ENCODE measurements at regions of chrX and their contacts with region 1.

Region 1: GRCh38 chrX:104136241-104137019 is 20.4 kb downstream of the SLC25A53 start:
- DNase-seq: peak; percentile 79
- H3K4me3 ChIP-seq: peak overlapping the region; percentile 61
- H3K27ac ChIP-seq: peak overlapping the region; percentile 72
- H3K27me3 ChIP-seq: no peaks in the 10 kb centered on the region
- CTCF ChIP-seq: peak; percentile 69

Region 2: GRCh38 chrX:104098151-104098808 is 38.1 kb before region 1 on chrX:
- CTCF ChIA-PET with region 1: interaction called, 35 read pairs
- POLR2A ChIA-PET with region 1: no interaction called
- DNase-seq: peak; percentile 45
- H3K4me3 ChIP-seq: no peak overlapping the region
- H3K27ac ChIP-seq: no peak overlapping the region
- H3K27me3 ChIP-seq: no peaks in the 10 kb centered on the region
- CTCF ChIP-seq: peak; percentile 57

Region 3: DNA sequence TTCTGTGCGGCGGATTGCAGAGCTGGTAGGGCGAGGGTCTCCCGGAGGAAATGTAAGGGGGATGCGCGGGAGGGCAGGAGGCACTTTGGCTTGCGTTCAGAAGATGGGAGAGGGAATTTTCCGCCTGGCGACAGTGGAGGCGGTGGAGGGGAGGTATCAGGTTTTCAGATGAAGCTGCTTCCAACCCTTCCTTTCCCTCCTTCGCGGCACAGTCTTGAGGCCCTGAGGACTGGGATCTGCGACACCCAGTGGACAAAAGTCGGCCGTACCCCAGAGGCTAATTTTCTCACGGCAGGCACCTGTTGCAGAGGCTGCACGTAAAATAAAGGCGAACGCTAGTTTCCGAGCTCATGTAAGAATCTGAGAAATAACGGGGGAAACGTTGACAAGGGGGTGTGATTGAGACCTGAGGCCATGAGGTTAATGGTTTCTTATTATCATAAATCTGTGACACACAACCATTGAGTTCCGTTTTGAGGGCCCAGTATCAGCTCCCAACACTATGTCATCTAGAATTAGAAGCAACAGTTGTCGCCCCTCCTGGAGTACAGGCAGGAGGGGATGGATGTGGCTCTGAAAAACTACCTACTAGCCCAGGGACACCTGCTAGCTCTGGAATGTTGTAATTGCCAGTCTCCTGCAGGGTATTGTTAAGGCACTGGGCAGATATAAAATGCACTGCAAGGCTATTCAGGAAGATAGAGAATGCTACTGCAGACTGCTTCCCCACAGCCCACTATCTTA is 23.0 kb before region 1 on chrX:
- CTCF ChIA-PET with region 1: interaction called, 16 read pairs
- POLR2A ChIA-PET with region 1: no interaction called
- DNase-seq: no peak
- H3K4me3 ChIP-seq: peak overlapping the region; percentile 71
- H3K27ac ChIP-seq: peak overlapping the region; percentile 31
- H3K27me3 ChIP-seq: no peaks in the 10 kb centered on the region
- CTCF ChIP-seq: peak; percentile 47

Region 4: GRCh38 chrX:104122829-104123228 is 13.6 kb before region 1 on chrX:
- CTCF ChIA-PET with region 1: interaction called, 22 read pairs
- POLR2A ChIA-PET with region 1: no interaction called
- DNase-seq: no peak
- H3K4me3 ChIP-seq: no peak overlapping the region
- H3K27ac ChIP-seq: no peak overlapping the region
- H3K27me3 ChIP-seq: no peaks in the 10 kb centered on the region
- CTCF ChIP-seq: no peak

Region 5: GRCh38 chrX:104183685-104184084 is 47.3 kb after region 1 on chrX:
- CTCF ChIA-PET with region 1: no interaction called
- POLR2A ChIA-PET with region 1: no interaction called
- DNase-seq: no peak
- H3K4me3 ChIP-seq: no peak overlapping the region
- H3K27ac ChIP-seq: no peak overlapping the region
- H3K27me3 ChIP-seq: no peaks in the 10 kb centered on the region
- CTCF ChIP-seq: no peak